CD8-positive, alpha-beta T cell (primary cell): ENCODE measurements at regions of chr3 and their contacts with region 1.

Region 1: DNA sequence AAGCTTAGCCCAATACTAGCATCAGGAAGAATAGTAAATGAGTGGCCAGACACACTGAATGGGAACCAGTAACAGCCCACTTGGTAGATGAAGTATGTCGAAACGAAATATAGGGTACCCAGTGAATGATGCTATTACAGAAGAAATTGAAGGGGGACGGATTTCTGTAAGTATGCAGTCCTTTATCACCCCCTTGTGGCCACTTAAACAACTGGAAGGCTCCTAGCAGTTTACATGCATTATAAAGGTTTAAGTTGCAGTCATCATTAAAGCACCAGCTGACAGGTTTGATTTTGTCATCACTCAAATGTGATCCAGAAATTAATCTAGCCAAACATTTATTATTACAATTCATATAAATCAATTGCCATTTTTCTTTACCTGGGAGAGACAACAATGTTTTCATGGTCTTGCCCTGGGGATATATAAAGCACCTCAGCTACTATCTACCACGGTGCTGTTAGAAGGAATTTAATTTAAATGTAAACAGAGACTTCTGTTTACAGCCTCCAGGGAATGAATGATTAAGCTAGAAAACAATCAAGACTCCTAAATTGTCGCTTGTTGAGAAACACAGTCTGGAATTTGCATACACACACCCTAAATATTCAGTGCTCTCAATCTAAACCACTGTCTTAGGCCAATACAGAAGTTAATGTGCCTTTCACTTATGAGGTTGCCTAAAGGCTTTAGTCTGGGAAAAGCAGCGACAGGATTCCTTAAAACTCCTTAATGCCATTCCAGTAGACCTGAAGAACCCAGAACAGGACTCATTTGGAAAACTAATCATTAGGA is 7.8 kb downstream of the EIF1B start:
- DNase-seq: peak in 7 of 9 experiments; percentile 5 to 82 (median 43)
- ATAC-seq: peak; percentile 91
- H3K4me3 ChIP-seq: no peak overlapping the region
- H3K4me3 Mint-ChIP-seq: no peak overlapping the region
- H3K27ac ChIP-seq: no peak overlapping the region
- H3K27ac Mint-ChIP-seq: no peak overlapping the region
- H3K4me1 ChIP-seq: no peaks in the 10 kb centered on the region
- H3K4me1 Mint-ChIP-seq: peaks cover 10% of the 10 kb centered on the region
- H3K27me3 ChIP-seq: no peaks in the 10 kb centered on the region
- H3K27me3 Mint-ChIP-seq: no peaks in the 10 kb centered on the region
- CTCF ChIP-seq: peak; percentile 72

Region 2: DNA sequence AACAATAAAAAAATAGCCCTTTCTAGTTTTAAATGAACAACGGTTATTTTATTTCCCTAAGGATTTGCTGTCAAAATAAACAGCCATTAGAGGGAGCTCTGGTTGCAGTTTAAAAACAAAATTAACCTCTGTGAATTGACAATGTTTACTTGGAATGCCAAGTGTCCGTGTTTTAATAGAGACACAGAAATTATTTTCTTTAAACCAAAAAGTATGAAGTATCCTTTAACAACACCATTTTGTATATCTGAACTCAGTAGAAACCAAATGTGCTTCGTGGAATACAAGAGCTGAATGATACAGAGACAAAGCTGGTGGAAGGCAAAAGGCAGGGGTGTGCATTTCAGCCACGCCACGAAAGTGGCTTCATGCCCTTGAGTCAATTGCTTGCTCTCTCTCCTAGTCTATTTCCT is 775.3 kb before region 1 on chr3:
- CTCF ChIA-PET with region 1: no interaction called
- POLR2A ChIA-PET with region 1: no interaction called
- intact Hi-C with region 1: no loop called
- DNase-seq: no peak
- ATAC-seq: no peak
- H3K4me3 ChIP-seq: no peak overlapping the region
- H3K4me3 Mint-ChIP-seq: no peak overlapping the region
- H3K27ac ChIP-seq: no peak overlapping the region
- H3K27ac Mint-ChIP-seq: no peak overlapping the region
- H3K4me1 ChIP-seq: no peaks in the 10 kb centered on the region
- H3K4me1 Mint-ChIP-seq: no peaks in the 10 kb centered on the region
- H3K27me3 ChIP-seq: no peaks in the 10 kb centered on the region
- H3K27me3 Mint-ChIP-seq: peaks cover 7% of the 10 kb centered on the region
- CTCF ChIP-seq: no peak

Region 3: GRCh38 chr3:39668420-39668819 is 648.8 kb before region 1 on chr3:
- CTCF ChIA-PET with region 1: no interaction called
- POLR2A ChIA-PET with region 1: no interaction called
- intact Hi-C with region 1: loop called in 1 of 2 experiments (anchors 5 kb)
- DNase-seq: peak in 2 of 9 experiments; percentile 8 to 23
- ATAC-seq: no peak
- H3K4me3 ChIP-seq: no peak overlapping the region
- H3K4me3 Mint-ChIP-seq: no peak overlapping the region
- H3K27ac ChIP-seq: no peak overlapping the region
- H3K27ac Mint-ChIP-seq: no peak overlapping the region
- H3K4me1 ChIP-seq: no peaks in the 10 kb centered on the region
- H3K4me1 Mint-ChIP-seq: no peaks in the 10 kb centered on the region
- H3K27me3 ChIP-seq: no peaks in the 10 kb centered on the region
- H3K27me3 Mint-ChIP-seq: peaks cover 3% of the 10 kb centered on the region
- CTCF ChIP-seq: peak; percentile 24

Region 4: GRCh38 chr3:39707314-39707909 is 609.8 kb before region 1 on chr3:
- CTCF ChIA-PET with region 1: no interaction called
- POLR2A ChIA-PET with region 1: no interaction called
- intact Hi-C with region 1: loop called in 1 of 2 experiments (anchors 5 kb)
- DNase-seq: peak in 2 of 9 experiments; percentile 16 to 29
- ATAC-seq: no peak
- H3K4me3 ChIP-seq: no peak overlapping the region
- H3K4me3 Mint-ChIP-seq: no peak overlapping the region
- H3K27ac ChIP-seq: no peak overlapping the region
- H3K27ac Mint-ChIP-seq: no peak overlapping the region
- H3K4me1 ChIP-seq: no peaks in the 10 kb centered on the region
- H3K4me1 Mint-ChIP-seq: no peaks in the 10 kb centered on the region
- H3K27me3 ChIP-seq: no peaks in the 10 kb centered on the region
- H3K27me3 Mint-ChIP-seq: peaks cover 2% of the 10 kb centered on the region
- CTCF ChIP-seq: peak; percentile 64

Region 5: GRCh38 chr3:40179016-40179415 is 138.2 kb before region 1 on chr3:
- CTCF ChIA-PET with region 1: interaction called, 10 read pairs
- POLR2A ChIA-PET with region 1: no interaction called
- intact Hi-C with region 1: no loop called
- DNase-seq: peak; percentile 17 to 56 (median 44)
- ATAC-seq: no peak
- H3K4me3 ChIP-seq: no peak overlapping the region
- H3K4me3 Mint-ChIP-seq: no peak overlapping the region
- H3K27ac ChIP-seq: no peak overlapping the region
- H3K27ac Mint-ChIP-seq: no peak overlapping the region
- H3K4me1 ChIP-seq: no peaks in the 10 kb centered on the region
- H3K4me1 Mint-ChIP-seq: no peaks in the 10 kb centered on the region
- H3K27me3 ChIP-seq: no peaks in the 10 kb centered on the region
- H3K27me3 Mint-ChIP-seq: no peaks in the 10 kb centered on the region
- CTCF ChIP-seq: peak; percentile 63

Region 6: GRCh38 chr3:40191850-40192448 is 125.3 kb before region 1 on chr3:
- CTCF ChIA-PET with region 1: interaction called, 183 read pairs
- POLR2A ChIA-PET with region 1: interaction called, 3 read pairs
- intact Hi-C with region 1: loop called in 1 of 2 experiments (anchors 1 kb)
- DNase-seq: peak; percentile 8 to 70 (median 59)
- ATAC-seq: peak; percentile 78
- H3K4me3 ChIP-seq: no peak overlapping the region
- H3K4me3 Mint-ChIP-seq: no peak overlapping the region
- H3K27ac ChIP-seq: no peak overlapping the region
- H3K27ac Mint-ChIP-seq: no peak overlapping the region
- H3K4me1 ChIP-seq: no peaks in the 10 kb centered on the region
- H3K4me1 Mint-ChIP-seq: no peaks in the 10 kb centered on the region
- H3K27me3 ChIP-seq: no peaks in the 10 kb centered on the region
- H3K27me3 Mint-ChIP-seq: no peaks in the 10 kb centered on the region
- CTCF ChIP-seq: peak; percentile 83

Region 7: DNA sequence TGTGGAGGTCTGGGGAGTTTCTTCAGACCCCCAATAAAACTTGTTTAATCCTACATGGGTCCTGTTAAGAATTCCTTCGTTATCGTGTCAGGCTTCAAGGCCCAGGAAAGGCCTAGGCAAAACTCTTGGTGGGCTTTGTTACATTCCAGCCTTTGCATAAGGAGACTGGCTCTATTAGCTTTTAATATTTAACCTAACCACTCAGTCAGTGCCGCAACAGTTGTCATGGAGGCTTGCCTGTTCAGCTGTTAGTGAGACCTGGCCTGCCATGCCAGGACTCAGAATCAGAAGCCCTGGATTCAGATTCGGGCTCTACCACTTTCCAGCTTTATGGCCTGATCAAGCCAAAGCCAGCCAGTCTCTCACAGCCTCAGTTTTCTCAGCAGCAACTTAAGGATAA is 11.8 kb after region 1 on chr3:
- CTCF ChIA-PET with region 1: interaction called, 26 read pairs
- POLR2A ChIA-PET with region 1: no interaction called
- intact Hi-C with region 1: no loop called
- DNase-seq: no peak
- ATAC-seq: no peak
- H3K4me3 ChIP-seq: no peak overlapping the region
- H3K4me3 Mint-ChIP-seq: no peak overlapping the region
- H3K27ac ChIP-seq: no peak overlapping the region
- H3K27ac Mint-ChIP-seq: no peak overlapping the region
- H3K4me1 ChIP-seq: no peaks in the 10 kb centered on the region
- H3K4me1 Mint-ChIP-seq: peaks cover 3% of the 10 kb centered on the region
- H3K27me3 ChIP-seq: no peaks in the 10 kb centered on the region
- H3K27me3 Mint-ChIP-seq: peaks cover 3% of the 10 kb centered on the region
- CTCF ChIP-seq: no peak